ENCODE measurements at regions of chr3 and their contacts with region 1.

Region 1: DNA sequence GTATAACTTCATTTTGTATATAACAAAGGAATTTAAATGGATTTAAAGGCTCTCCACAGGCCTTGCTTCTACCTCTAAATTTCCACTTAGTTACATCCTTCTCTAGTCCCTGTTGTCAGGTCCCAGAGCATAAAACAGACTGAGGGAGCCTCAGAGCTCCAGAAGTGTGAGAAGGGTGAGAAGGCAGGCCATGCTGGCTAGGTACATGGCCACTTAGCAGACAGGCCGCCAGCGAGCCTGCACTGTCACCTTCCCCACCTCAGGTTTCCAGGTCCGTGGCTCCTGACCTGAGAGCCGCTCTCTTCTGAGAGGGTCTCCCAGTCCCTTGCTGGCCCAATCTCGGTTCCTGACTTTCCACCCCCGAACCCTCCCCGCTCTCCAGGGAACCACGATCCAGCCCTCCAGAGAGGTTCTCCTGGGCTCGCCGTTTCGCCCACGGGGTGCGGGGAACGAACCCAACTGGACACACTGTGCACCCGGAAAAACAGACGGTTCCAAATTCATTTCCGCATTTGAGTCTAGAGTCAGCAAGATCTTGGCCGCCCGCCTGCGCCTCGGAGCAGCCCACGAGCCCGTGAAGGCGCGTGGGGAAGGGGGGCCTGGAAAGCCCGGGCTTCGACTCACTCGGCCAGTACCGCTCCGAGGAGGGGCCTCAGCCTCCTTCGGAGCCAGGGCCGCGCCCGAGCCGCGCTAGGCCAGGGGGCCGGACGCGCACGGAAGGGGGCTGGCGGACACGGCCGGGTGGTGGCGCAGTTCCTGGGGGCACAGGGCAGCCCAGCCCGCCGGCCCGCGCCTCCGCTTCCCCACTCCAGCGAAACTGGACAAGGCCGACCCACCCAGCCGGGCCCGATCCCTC is 16.7 kb upstream of the SOX2 start:
- DNase-seq: peak; percentile 27 to 48
- ATAC-seq: peak; percentile 75 to 93 (median 87)
- H3K4me3 ChIP-seq: peak overlapping the region; percentile 21 to 53 (median 46)
- H3K27ac ChIP-seq: peak overlapping the region in 3 of 10 donors; percentile 6 to 28 (median 19)
- H3K4me1 ChIP-seq: peaks cover 6 to 19% (median 16%) of the 10 kb centered on the region in 9 donors
- H3K27me3 ChIP-seq: peaks cover 11 to 74% (median 53%) of the 10 kb centered on the region in 7 donors
- CTCF ChIP-seq: peak in 6 of 9 donors; percentile 14 to 47 (median 34)

Region 2: DNA sequence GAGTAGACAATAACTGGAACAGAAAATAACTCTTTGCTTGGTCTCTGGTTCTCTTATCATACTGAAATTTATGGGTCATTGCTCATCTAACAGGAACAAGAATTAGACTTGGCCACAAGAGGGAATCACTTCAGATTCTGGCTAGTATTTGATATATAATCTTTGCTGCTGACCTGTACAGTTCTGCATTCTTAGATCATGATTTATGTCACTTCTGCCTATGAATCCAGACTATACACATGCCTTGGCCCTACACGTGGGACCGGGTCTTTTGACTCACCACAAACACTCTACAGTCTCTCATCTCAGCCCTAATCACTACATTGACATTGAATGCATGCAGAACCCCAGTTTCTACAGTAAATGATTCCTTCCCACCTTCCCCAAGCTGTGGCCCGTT is 145.8 kb before region 1 on chr3:
- intact Hi-C with region 1: loop called in 1 of 10 experiments (anchors 10 kb)
- DNase-seq: no peak
- ATAC-seq: no peak
- H3K4me3 ChIP-seq: no peak overlapping the region
- H3K27ac ChIP-seq: no peak overlapping the region
- H3K4me1 ChIP-seq: no peaks in the 10 kb centered on the region
- H3K27me3 ChIP-seq: no peaks in the 10 kb centered on the region
- CTCF ChIP-seq: no peak